ENCODE measurements at regions of chr17 and their contacts with region 1.

Region 1: GRCh38 chr17:19507775-19508576 is 25.7 kb upstream of the SLC47A1 start:
- DNase-seq: peak; percentile 95
- H3K4me3 Mint-ChIP-seq: peak overlapping the region; percentile 86
- H3K27ac Mint-ChIP-seq: peak overlapping the region; percentile 86
- H3K4me1 Mint-ChIP-seq: peaks cover 7% of the 10 kb centered on the region
- H3K27me3 Mint-ChIP-seq: peaks cover 17% of the 10 kb centered on the region

Region 2: DNA sequence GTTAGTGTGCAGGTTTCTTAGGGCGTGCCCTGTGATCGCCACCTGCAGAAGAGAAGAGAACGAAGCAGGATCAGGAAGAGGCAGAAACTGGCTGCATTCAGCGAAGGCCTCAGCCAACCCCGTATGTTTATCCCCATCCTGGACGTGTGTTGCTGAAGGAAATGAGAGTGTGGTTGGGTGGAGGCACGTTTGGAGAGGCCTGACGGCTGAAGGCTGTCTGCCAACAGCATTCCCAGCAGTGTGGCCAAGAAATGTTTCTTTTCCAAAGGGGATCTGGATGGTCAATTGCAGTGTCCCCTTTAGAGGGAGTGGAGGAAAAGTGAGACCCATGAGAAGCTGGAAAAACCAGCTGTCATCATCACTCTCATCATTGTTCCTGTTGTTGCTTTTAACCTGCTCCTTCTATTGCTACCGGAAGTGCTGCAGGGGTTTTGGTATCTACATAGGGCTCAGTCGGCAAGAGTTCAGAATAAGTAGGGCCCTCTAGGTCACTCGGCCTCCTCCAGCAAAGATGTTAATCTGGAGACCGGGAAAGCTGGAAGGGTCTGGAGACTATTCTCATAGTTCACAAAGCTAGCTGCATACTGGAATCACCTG is 20.9 kb before region 1 on chr17:
- intact Hi-C with region 1: no loop called
- DNase-seq: no peak
- H3K4me3 Mint-ChIP-seq: no peak overlapping the region
- H3K27ac Mint-ChIP-seq: no peak overlapping the region
- H3K4me1 Mint-ChIP-seq: no peaks in the 10 kb centered on the region
- H3K27me3 Mint-ChIP-seq: peaks cover 2% of the 10 kb centered on the region

Region 3: DNA sequence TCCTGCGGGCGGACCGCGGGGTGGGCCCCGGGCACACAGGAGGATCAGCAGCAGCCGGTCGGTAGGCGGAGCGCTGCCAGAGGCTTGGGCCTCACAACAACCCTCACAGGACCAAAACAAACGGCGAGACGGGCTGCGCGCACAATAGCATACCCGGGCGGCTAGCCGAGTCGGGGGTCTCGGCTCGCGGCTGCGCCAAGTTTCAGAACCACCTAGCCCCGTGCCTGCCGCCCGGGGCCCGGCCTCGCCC is 359.0 kb after region 1 on chr17:
- intact Hi-C with region 1: loop called (anchors 5 kb)
- DNase-seq: no peak
- H3K4me3 Mint-ChIP-seq: peak overlapping the region; percentile 86
- H3K27ac Mint-ChIP-seq: peak overlapping the region; percentile 75
- H3K4me1 Mint-ChIP-seq: peaks cover 9% of the 10 kb centered on the region
- H3K27me3 Mint-ChIP-seq: no peaks in the 10 kb centered on the region

Measured in activated CD4-positive, alpha-beta T cell treated with anti-CD3 and anti-CD28 coated beads, Interleukin-2, amount 10 ng/mL, durations not matched to agents 24 days and 14 days (primary cell).